Heart right ventricle (tissue), 16 donors: ENCODE measurements at regions of chr5 and their contacts with region 1.

Region 1: DNA sequence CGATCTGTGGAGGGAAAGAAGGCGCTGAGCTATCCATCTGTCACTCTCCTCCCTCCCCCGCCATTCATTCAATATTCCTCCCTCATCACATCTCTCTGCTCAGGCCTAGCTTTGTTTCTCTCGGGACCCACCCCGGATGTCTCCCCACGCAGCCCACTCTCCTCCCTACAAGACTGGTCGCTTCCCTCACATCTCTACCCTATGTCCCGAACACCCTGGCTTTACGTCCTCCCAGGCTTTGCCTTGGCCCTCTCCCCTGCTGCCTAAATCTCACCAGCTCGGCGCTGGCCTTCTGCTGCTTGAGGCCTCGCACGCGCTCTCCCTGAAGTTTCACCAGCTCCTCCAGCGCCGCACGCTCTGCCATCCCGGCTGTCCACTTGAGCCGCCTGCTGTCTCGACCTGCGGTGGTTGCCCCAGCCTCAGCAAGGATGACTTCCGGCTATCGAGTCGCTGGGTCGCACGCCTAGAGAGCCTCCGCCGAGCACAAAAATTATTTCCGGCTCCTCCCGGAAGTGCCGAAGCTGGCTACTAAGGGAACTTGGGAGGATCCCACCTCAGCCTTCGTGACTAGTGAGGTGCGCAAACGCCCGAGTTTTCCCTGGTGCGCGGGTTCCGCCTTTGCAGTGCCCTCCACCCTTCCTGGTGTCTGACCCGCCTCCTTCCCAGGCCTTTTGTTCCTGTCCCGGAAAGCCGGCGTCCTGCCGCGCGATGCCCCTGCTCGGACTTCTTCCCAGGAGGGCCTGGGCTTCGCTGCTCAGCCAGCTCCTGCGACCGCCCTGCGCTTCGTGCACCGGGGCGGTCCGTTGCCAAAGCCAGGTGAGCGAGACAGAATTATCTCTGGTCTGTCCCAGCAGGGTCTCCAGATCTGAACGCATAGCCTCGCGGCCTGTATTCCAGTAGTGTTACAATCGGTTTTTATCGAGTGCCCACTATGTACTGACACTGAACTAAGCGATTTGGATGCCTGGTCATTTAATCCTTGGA is at the starts of genes HARS1 and HARS2:
- DNase-seq: peak; percentile 87 to 92
- ATAC-seq: peak; percentile 97 to 99 (median 98)
- H3K4me3 ChIP-seq: peak within 1 kb of the TSS; percentile 60 to 96 (median 83)
- H3K27ac ChIP-seq: peak within 1 kb of the TSS; percentile 65 to 96 (median 88)
- H3K4me1 ChIP-seq: peaks cover 0 to 44% (median 32%) of the 10 kb centered on the region in 9 donors
- H3K27me3 ChIP-seq: no peaks in the 10 kb centered on the region
- CTCF ChIP-seq: peak in 2 of 9 donors; percentile 30 to 38
- total RNA-seq, gene HARS1: 30.3 to 41.8 (median 35.8) TPM
- total RNA-seq, gene HARS2: 23.3 to 37.3 (median 30.0) TPM

Region 2: DNA sequence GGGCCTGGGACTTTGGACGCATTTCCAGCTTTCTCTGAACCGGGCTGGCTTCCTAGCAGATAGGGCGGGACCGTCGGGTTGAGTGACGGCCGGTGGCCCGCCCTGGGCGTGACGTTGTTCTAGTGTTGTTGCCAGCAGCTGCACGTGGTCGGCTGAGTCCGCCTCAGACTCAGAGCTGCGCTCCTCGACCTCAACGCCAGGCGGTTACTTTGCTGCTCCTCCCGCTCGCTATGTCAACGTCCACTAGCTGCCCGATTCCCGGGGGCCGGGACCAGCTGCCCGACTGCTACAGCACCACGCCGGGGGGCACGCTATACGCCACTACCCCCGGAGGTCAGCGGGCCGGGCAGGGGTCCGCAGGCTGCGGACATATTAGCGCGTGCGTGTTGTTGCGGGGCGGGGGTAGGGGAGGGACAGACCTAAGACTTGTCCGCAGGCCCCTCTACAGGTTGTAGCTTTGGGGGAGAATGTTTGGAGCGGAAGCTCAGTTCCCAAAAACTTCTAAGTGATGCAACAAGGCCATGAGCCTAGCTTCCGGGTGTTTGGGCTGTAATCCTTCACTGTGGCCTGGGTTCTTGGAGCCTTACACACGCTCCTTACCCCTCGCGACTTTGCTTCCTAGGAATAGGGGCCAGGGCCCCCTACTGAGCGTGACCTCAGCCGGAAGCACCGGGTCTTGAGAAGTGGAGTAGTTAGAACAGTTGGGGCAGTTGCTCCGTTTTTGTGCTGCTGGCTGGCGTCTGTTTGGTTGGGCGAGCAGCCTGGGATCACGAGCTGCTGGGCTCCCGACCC is 143.5 kb before region 1 on chr5 and contains the start of gene EIF4EBP3:
- intact Hi-C with region 1: no loop called
- DNase-seq: peak; percentile 98
- ATAC-seq: peak; percentile 93 to 96 (median 96)
- H3K4me3 ChIP-seq: peak within 1 kb of the TSS in 9 of 10 donors; percentile 35 to 64 (median 57)
- H3K27ac ChIP-seq: peak within 1 kb of the TSS; percentile 77 to 97 (median 94)
- H3K4me1 ChIP-seq: peaks cover 27 to 53% (median 46%) of the 10 kb centered on the region in 9 donors
- H3K27me3 ChIP-seq: no peaks in the 10 kb centered on the region
- CTCF ChIP-seq: peak; percentile 46 to 78 (median 60)
- total RNA-seq, gene EIF4EBP3: 9.2 to 36.5 (median 21.5) TPM

Region 3: GRCh38 chr5:140647042-140647341 is 44.2 kb before region 1 on chr5:
- intact Hi-C with region 1: loop called in 1 of 10 experiments (anchors 5 kb)
- DNase-seq: no peak
- ATAC-seq: peak in 2 of 8 donors; percentile 3 to 5
- H3K4me3 ChIP-seq: peak overlapping the region; percentile 53 to 99 (median 90)
- H3K27ac ChIP-seq: peak overlapping the region; percentile 54 to 92 (median 86)
- H3K4me1 ChIP-seq: peaks cover 4 to 46% (median 26%) of the 10 kb centered on the region in 9 donors
- H3K27me3 ChIP-seq: no peaks in the 10 kb centered on the region
- CTCF ChIP-seq: no peak

Region 4: DNA sequence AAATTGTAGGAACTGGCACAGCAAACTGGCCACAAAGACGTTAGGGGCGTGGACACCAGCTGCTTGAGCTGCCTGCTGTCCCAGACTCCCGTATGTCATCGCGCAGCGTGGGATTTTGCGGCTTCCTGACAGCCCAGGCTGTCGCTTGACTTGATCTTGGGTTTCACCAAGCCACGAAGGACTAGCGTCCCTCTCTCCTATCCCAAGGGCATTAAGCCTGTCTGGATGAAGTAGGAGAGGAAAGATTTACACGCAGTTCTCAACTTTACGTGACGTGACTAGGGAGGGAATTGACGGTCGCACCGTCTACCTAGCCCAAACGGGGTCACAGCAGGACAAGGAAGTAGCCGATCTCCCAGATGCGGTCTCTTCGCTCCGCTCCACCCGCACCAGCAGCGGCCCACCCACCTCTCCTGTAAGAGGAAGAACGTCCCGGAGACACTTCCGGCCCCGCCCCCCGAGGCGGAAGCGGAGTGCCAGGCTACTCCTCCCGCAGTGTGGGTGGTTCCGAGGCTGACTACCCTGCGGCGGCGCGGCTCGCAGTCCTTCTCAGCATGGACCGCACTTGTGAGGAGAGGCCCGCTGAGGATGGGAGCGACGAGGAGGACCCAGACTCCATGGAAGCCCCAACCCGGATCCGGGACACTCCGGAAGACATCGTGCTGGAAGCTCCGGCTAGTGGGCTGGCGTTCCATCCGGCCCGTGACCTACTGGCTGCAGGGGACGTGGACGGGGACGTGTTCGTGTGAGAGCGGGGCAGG is 26.7 kb before region 1 on chr5 and contains the start of gene WDR55:
- intact Hi-C with region 1: loop called in 1 of 10 experiments (anchors 2 kb)
- DNase-seq: peak; percentile 97
- ATAC-seq: peak; percentile 97 to 99 (median 99)
- H3K4me3 ChIP-seq: peak within 1 kb of the TSS; percentile 64 to 94 (median 80)
- H3K27ac ChIP-seq: peak within 1 kb of the TSS; percentile 85 to 94 (median 92)
- H3K4me1 ChIP-seq: peaks cover 6 to 39% (median 26%) of the 10 kb centered on the region in 9 donors
- H3K27me3 ChIP-seq: no peaks in the 10 kb centered on the region
- CTCF ChIP-seq: no peak
- total RNA-seq, gene WDR55: 10.5 to 14.5 (median 12.2) TPM